ENCODE measurements at regions of chr15 and their contacts with region 1.

Region 1: GRCh38 chr15:90320061-90320884 is 31.8 kb upstream of the ZNF774 start:
- DNase-seq: peak; percentile 76
- H3K4me3 Mint-ChIP-seq: no peak overlapping the region
- H3K27ac Mint-ChIP-seq: no peak overlapping the region
- H3K4me1 Mint-ChIP-seq: peaks cover 7% of the 10 kb centered on the region
- H3K27me3 Mint-ChIP-seq: peaks cover 24% of the 10 kb centered on the region

Region 2: GRCh38 chr15:90143166-90143655 is 177.1 kb before region 1 on chr15:
- CTCF ChIA-PET with region 1: interaction called, 12 read pairs
- DNase-seq: peak; percentile 83
- H3K4me3 Mint-ChIP-seq: peak overlapping the region; percentile 18
- H3K27ac Mint-ChIP-seq: peak overlapping the region; percentile 84
- H3K4me1 Mint-ChIP-seq: peaks cover 41% of the 10 kb centered on the region
- H3K27me3 Mint-ChIP-seq: peaks cover 12% of the 10 kb centered on the region

Region 3: DNA sequence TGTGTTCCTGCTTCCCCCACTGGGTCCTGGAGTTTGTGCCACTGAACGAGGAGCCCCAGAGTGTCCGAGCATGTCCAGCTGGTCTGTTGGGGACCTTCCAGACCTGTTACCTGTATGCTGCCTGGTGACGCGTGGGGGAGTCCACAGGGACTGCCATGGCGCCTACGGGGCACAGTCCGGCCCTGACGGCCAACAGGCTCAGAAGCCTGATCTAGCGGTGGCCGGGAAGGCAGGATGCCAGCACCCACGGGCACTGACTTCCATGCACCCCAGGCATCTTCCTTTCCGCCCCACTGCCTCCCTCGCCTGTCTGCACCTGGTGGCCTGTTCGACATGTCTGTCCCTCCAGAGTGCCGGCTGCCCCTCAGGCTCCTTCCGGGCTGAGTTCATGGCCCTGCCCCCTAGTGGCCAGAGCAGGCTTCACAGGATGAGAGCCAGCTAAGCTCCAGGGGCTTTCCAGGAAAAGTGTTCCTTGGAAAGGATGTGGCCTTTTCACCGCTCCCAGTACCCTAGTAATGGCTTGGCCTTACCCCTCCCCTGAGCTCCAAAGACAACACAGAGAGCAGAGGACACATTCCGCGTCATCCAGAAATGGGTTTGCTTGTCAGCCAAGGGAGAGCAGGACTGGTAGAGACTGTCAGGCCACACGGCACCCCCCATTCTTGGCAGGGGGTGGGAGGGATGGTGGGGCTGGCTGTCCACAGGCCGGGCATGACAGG is 19.1 kb before region 1 on chr15:
- CTCF ChIA-PET with region 1: interaction called, 33 read pairs
- DNase-seq: peak; percentile 72
- H3K4me3 Mint-ChIP-seq: no peak overlapping the region
- H3K27ac Mint-ChIP-seq: no peak overlapping the region
- H3K4me1 Mint-ChIP-seq: peaks cover 21% of the 10 kb centered on the region
- H3K27me3 Mint-ChIP-seq: peaks cover 16% of the 10 kb centered on the region

Region 4: GRCh38 chr15:90336705-90337141 is 16.4 kb after region 1 on chr15:
- CTCF ChIA-PET with region 1: interaction called, 16 read pairs
- DNase-seq: peak; percentile 45
- H3K4me3 Mint-ChIP-seq: no peak overlapping the region
- H3K27ac Mint-ChIP-seq: no peak overlapping the region
- H3K4me1 Mint-ChIP-seq: peaks cover 10% of the 10 kb centered on the region
- H3K27me3 Mint-ChIP-seq: no peaks in the 10 kb centered on the region

Region 5: GRCh38 chr15:90425726-90426346 is 105.6 kb after region 1 on chr15:
- CTCF ChIA-PET with region 1: interaction called, 15 read pairs
- DNase-seq: no peak
- H3K4me3 Mint-ChIP-seq: no peak overlapping the region
- H3K27ac Mint-ChIP-seq: no peak overlapping the region
- H3K4me1 Mint-ChIP-seq: peaks cover 14% of the 10 kb centered on the region
- H3K27me3 Mint-ChIP-seq: no peaks in the 10 kb centered on the region

Region 6: GRCh38 chr15:90482124-90483011 is 162.1 kb after region 1 on chr15:
- CTCF ChIA-PET with region 1: interaction called, 137 read pairs
- DNase-seq: peak; percentile 68
- H3K4me3 Mint-ChIP-seq: no peak overlapping the region
- H3K27ac Mint-ChIP-seq: peak overlapping the region; percentile 50
- H3K4me1 Mint-ChIP-seq: peaks cover 39% of the 10 kb centered on the region
- H3K27me3 Mint-ChIP-seq: no peaks in the 10 kb centered on the region

Region 7: GRCh38 chr15:90931737-90932659 is 611.7 kb after region 1 on chr15 and contains the start of gene HDDC3:
- CTCF ChIA-PET with region 1: interaction called, 11 read pairs
- DNase-seq: peak; percentile 93
- H3K4me3 Mint-ChIP-seq: peak within 1 kb of the TSS; percentile 98
- H3K27ac Mint-ChIP-seq: peak within 1 kb of the TSS; percentile 100
- H3K4me1 Mint-ChIP-seq: peaks cover 70% of the 10 kb centered on the region
- H3K27me3 Mint-ChIP-seq: no peaks in the 10 kb centered on the region

Measured in activated naive CD4-positive, alpha-beta T cell treated with anti-CD3 and anti-CD28 coated beads, Interleukin-2, amount 10 ng/mL, durations not matched to agents 7 days and 5 days (primary cell).